CD14-positive monocyte (primary cell): ENCODE measurements at regions of chr17 and their contacts with region 1.

Region 1: GRCh38 chr17:56592487-56593085 is 913 bp upstream of the NOG start:
- DNase-seq: peak; percentile 39 to 63 (median 52)
- H3K4me3 ChIP-seq: peak overlapping the region; percentile 35 to 70 (median 42)
- H3K4me3 Mint-ChIP-seq: peak overlapping the region; percentile 72 to 89
- H3K27ac ChIP-seq: no peak overlapping the region
- H3K27ac Mint-ChIP-seq: no peak overlapping the region
- H3K4me1 ChIP-seq: peaks cover 36 to 50% of the 10 kb centered on the region in 2 donors
- H3K4me1 Mint-ChIP-seq: peaks cover 33% of the 10 kb centered on the region
- H3K27me3 ChIP-seq: peaks cover 41 to 53% of the 10 kb centered on the region in 2 donors
- H3K27me3 Mint-ChIP-seq: peaks cover 41 to 65% (median 46%) of the 10 kb centered on the region in 3 donors
- CTCF ChIP-seq: peak; percentile 97

Region 2: DNA sequence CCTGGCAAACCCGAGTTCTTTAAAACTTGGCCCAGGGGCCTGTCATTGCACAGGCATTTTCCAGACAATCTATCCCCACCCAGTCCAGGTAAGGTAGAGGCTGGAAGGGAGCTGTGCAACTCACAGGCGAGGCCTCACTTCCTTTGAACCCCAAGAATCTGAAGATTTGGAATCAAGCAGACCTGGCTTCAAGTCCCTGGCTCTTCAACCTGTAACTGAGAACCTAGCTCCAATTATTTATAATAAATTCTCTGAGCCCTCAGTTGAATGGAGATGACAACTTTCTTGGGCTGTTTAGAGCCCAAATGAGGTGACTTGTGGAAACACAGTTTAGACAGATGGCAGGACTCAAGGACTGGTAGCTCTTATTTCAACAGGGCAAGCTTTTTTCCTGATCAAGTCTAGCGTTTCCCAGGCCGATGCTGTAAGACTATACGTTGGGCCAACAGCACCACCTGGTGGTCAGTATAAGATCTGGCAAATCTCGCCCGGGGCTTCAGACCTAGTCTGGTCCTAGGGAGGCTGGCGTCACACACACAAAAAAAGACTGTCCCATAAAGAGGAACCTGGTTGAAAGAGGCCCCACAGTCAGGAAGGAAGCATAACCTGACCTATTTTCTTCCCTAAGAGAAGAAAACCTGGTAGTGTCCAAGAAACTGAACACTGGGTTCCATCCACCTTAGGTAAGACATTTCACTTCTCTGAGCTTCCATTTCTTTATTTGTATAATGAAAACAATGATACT is 123.2 kb after region 1 on chr17:
- intact Hi-C with region 1: loop called (anchors 2 kb)
- DNase-seq: peak; percentile 74 to 88 (median 87)
- H3K4me3 ChIP-seq: no peak overlapping the region
- H3K4me3 Mint-ChIP-seq: no peak overlapping the region
- H3K27ac ChIP-seq: no peak overlapping the region
- H3K27ac Mint-ChIP-seq: no peak overlapping the region
- H3K4me1 ChIP-seq: peaks cover 9 to 12% of the 10 kb centered on the region in 2 donors
- H3K4me1 Mint-ChIP-seq: peaks cover 11% of the 10 kb centered on the region
- H3K27me3 ChIP-seq: no peaks in the 10 kb centered on the region
- H3K27me3 Mint-ChIP-seq: peaks cover 3 to 7% (median 5%) of the 10 kb centered on the region in 3 donors
- CTCF ChIP-seq: peak; percentile 86

Region 3: GRCh38 chr17:56774650-56775049 is 182.1 kb after region 1 on chr17:
- intact Hi-C with region 1: loop called in 1 of 2 experiments (anchors 5 kb)
- DNase-seq: no peak
- H3K4me3 ChIP-seq: no peak overlapping the region
- H3K4me3 Mint-ChIP-seq: no peak overlapping the region
- H3K27ac ChIP-seq: no peak overlapping the region
- H3K27ac Mint-ChIP-seq: no peak overlapping the region
- H3K4me1 ChIP-seq: peaks cover 8 to 11% of the 10 kb centered on the region in 2 donors
- H3K4me1 Mint-ChIP-seq: peaks cover 23% of the 10 kb centered on the region
- H3K27me3 ChIP-seq: peaks cover 0 to 7% of the 10 kb centered on the region in 2 donors
- H3K27me3 Mint-ChIP-seq: peaks cover 7 to 17% (median 12%) of the 10 kb centered on the region in 3 donors
- CTCF ChIP-seq: no peak

Region 4: GRCh38 chr17:56779898-56780733 is 187.5 kb after region 1 on chr17:
- intact Hi-C with region 1: loop called in 1 of 2 experiments (anchors 5 kb)
- DNase-seq: peak; percentile 75 to 83 (median 76)
- H3K4me3 ChIP-seq: peak overlapping the region in 1 of 3 experiments; percentile 57
- H3K4me3 Mint-ChIP-seq: peak overlapping the region; percentile 79 to 91
- H3K27ac ChIP-seq: no peak overlapping the region
- H3K27ac Mint-ChIP-seq: peak overlapping the region; percentile 30 to 80 (median 70)
- H3K4me1 ChIP-seq: peaks cover 18 to 22% of the 10 kb centered on the region in 2 donors
- H3K4me1 Mint-ChIP-seq: peaks cover 33% of the 10 kb centered on the region
- H3K27me3 ChIP-seq: peaks cover 0 to 22% of the 10 kb centered on the region in 2 donors
- H3K27me3 Mint-ChIP-seq: peaks cover 15 to 29% (median 24%) of the 10 kb centered on the region in 3 donors
- CTCF ChIP-seq: peak; percentile 98